Activated CD4-positive, alpha-beta T cell treated with anti-CD3 and anti-CD28 coated beads, Interleukin-2, amount 10 ng/mL, durations not matched to agents 24 days and 14 days (primary cell): ENCODE measurements at regions of chr2 and their contacts with region 1.

Region 1: GRCh38 chr2:161992526-161992925 is 81.5 kb downstream of the DPP4 start:
- DNase-seq: peak; percentile 90
- H3K4me3 Mint-ChIP-seq: peak overlapping the region; percentile 85
- H3K27ac Mint-ChIP-seq: peak overlapping the region; percentile 98
- H3K4me1 Mint-ChIP-seq: peaks cover 62% of the 10 kb centered on the region
- H3K27me3 Mint-ChIP-seq: no peaks in the 10 kb centered on the region

Region 2: GRCh38 chr2:160482673-160483072 is 1509.9 kb before region 1 on chr2:
- intact Hi-C with region 1: loop called (anchors 10 kb)
- DNase-seq: peak; percentile 83
- H3K4me3 Mint-ChIP-seq: peak overlapping the region; percentile 61
- H3K27ac Mint-ChIP-seq: peak overlapping the region; percentile 81
- H3K4me1 Mint-ChIP-seq: peaks cover 57% of the 10 kb centered on the region
- H3K27me3 Mint-ChIP-seq: no peaks in the 10 kb centered on the region

Region 3: DNA sequence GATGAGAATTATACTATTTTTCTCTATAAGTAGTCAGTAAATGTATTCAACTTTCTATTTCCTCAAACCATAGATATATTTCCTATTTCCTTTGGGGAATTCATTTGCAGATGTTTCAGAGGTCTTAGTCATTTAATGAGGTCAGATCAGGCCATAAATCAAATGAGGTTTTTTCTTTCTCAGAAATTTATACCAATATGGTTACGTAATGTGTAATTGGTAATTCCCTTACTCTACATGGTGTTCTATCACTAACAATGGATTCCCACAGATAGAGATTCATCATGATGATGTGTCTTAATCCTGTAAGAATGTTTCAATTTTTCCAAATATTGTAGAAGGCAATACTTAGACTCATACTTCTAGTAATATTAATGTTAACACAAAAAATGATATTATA is 26.5 kb before region 1 on chr2:
- intact Hi-C with region 1: loop called (anchors 1 kb)
- DNase-seq: no peak
- H3K4me3 Mint-ChIP-seq: no peak overlapping the region
- H3K27ac Mint-ChIP-seq: no peak overlapping the region
- H3K4me1 Mint-ChIP-seq: peaks cover 39% of the 10 kb centered on the region
- H3K27me3 Mint-ChIP-seq: no peaks in the 10 kb centered on the region

Region 4: DNA sequence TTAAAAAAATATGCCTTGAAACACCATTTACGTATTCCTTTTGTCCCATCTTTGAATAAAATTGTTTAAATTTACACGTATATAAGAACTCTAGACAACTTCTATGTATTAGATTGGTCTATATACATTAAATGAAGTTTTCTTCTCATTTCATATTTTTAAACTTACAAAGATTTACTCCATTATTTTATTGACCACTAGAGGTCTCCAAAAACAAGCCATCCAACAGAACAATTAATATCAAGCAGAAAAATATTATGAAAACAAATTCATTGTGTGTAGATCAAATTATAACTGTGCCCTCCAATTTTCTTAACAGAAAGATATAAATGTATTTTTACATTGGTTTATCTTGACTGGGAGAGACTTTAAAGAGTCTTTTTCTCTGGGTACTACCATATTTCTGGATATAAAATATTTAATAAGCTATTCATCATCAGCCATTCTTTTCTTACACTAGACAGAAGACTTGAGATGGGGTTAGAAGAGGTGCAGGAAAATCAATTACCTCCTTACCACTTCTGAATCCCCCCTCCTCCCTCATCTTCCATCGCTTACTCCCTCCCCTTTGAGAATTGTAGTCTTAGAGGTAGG is 15.0 kb after region 1 on chr2:
- intact Hi-C with region 1: loop called (anchors 1 kb)
- DNase-seq: no peak
- H3K4me3 Mint-ChIP-seq: no peak overlapping the region
- H3K27ac Mint-ChIP-seq: no peak overlapping the region
- H3K4me1 Mint-ChIP-seq: peaks cover 58% of the 10 kb centered on the region
- H3K27me3 Mint-ChIP-seq: no peaks in the 10 kb centered on the region

Region 5: DNA sequence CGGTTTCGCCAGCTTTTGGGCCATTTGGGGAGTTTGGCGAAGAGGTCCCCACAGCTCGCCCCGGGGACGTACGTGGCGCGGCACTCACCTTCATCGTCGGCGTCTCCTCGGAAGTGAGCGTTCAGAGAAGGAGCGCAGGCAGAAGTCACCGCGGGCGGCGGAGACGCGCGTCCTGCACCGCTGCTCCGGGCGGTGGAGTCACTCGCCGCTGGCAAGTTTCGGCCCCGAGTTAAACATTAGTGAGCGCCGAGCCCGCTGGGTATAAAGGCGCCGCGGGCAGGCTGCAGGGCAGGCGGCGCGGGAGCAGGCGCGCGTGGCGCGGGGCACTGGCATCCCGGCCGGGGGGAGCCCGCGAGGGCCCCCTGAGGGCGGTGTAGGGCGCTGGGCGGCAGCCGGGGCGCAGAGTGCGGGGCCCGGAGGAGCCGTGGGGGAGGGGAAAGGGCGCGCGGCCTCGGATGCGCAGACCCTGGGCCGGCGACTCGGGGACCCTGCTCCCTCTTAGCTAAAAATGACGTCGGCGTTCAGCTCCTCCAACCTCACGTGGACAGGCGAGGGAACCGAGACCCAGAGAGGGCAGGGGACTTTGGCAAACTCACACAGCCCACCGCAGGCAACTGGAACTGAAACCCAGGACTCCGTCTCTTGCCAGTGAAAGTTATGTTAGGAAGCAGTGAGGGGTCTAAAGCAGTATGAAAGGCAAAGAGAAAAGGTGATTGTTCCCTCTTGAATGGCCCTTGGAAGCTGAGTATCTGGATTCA is 81.5 kb after region 1 on chr2 and contains the start of gene DPP4:
- intact Hi-C with region 1: loop called (anchors 1 kb)
- DNase-seq: peak; percentile 89
- H3K4me3 Mint-ChIP-seq: peak within 1 kb of the TSS; percentile 95
- H3K27ac Mint-ChIP-seq: peak within 1 kb of the TSS; percentile 96
- H3K4me1 Mint-ChIP-seq: peaks cover 46% of the 10 kb centered on the region
- H3K27me3 Mint-ChIP-seq: no peaks in the 10 kb centered on the region
- total RNA-seq, gene DPP4: 65.4 and 68.0 TPM in 2 replicates

Region 6: GRCh38 chr2:162103446-162104009 is 111.0 kb after region 1 on chr2:
- intact Hi-C with region 1: no loop called
- DNase-seq: no peak
- H3K4me3 Mint-ChIP-seq: no peak overlapping the region
- H3K27ac Mint-ChIP-seq: no peak overlapping the region
- H3K4me1 Mint-ChIP-seq: peaks cover 7% of the 10 kb centered on the region
- H3K27me3 Mint-ChIP-seq: no peaks in the 10 kb centered on the region

Region 7: DNA sequence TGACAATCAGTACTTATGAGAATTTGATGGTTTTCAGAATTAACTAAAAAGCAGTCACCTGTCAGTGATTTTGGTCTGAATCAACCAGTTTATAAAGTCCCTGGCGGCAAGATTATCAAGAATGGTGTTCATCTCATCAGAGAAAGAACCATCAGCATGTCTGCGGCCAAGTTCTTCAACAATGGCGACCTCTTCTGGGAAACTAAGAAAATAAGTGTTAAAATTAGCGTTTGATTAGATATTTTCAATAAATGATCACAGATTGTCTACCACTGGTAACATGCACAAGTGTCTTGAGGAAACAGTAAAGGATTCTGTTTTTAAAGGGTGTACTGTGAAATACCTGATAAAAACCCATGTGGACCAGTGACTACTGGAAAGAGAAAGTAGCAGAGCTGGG is 151.4 kb after region 1 on chr2:
- intact Hi-C with region 1: no loop called
- DNase-seq: no peak
- H3K4me3 Mint-ChIP-seq: no peak overlapping the region
- H3K27ac Mint-ChIP-seq: no peak overlapping the region
- H3K4me1 Mint-ChIP-seq: no peaks in the 10 kb centered on the region
- H3K27me3 Mint-ChIP-seq: peaks cover 46% of the 10 kb centered on the region